ENCODE measurements at regions of chr15 and their contacts with region 1.

Region 1: GRCh38 chr15:82595766-82596165 is 51.4 kb downstream of the CPEB1 start:
- DNase-seq: no peak
- H3K4me3 ChIP-seq: no peak overlapping the region
- H3K27ac ChIP-seq: no peak overlapping the region
- H3K4me1 ChIP-seq: no peaks in the 10 kb centered on the region
- H3K27me3 ChIP-seq: no peaks in the 10 kb centered on the region
- CTCF ChIP-seq: no peak
- POLR2A ChIP-seq: no peak

Region 2: DNA sequence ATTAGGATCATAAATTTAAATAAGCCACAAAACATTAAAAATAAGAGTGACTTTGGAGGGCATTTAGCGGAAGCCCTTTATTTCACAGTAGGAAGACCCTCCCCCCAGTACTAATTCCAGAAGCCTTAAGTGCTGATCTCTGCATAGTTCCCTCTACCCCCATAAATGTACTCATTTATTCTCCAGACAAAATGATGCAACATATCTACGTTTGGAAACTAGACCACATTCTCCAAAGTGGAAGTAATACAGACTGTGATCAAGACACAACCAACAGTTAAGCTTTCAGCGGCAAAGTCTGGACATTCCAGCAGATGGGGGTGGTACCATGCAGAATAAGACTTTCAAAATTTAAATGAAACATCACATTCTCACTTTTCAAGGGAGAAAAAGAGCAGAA is 10.7 kb before region 1 on chr15:
- intact Hi-C with region 1: loop called (anchors 1 kb)
- DNase-seq: no peak
- H3K4me3 ChIP-seq: no peak overlapping the region
- H3K27ac ChIP-seq: no peak overlapping the region
- H3K4me1 ChIP-seq: no peaks in the 10 kb centered on the region
- H3K27me3 ChIP-seq: no peaks in the 10 kb centered on the region
- CTCF ChIP-seq: no peak
- POLR2A ChIP-seq: no peak